ENCODE measurements at regions of chr10 and their contacts with region 1.

Region 1: GRCh38 chr10:97686962-97687784 is at the start of gene AVPI1:
- DNase-seq: peak; percentile 95
- ATAC-seq: peak; percentile 84
- H3K4me3 ChIP-seq: peak within 1 kb of the TSS; percentile 91 to 97 (median 95)
- H3K27ac ChIP-seq: peak within 1 kb of the TSS; percentile 94
- H3K4me1 ChIP-seq: peaks cover 54% of the 10 kb centered on the region
- H3K27me3 ChIP-seq: no peaks in the 10 kb centered on the region; a peak in 1 of 5 replicates
- CTCF ChIP-seq: peak; percentile 25; the same call in 1 of the 2 replicates
- EP300 ChIP-seq: peak; percentile 27 to 31; a peak in 2 of 4 replicates
- POLR2A ChIP-seq: peak; percentile 84 to 87
- RAD21 ChIP-seq: peak; percentile 20; the same call in 1 of the 2 replicates
- total RNA-seq, gene AVPI1: 39.8 and 47.6 TPM in 2 replicates

Region 2: GRCh38 chr10:97101166-97101940 is 585.8 kb before region 1 on chr10:
- CTCF ChIA-PET with region 1: no interaction called
- POLR2A ChIA-PET with region 1: no interaction called
- in situ Hi-C with region 1: no loop called
- intact Hi-C with region 1: no loop called
- DNase-seq: no peak
- ATAC-seq: no peak
- H3K4me3 ChIP-seq: no peak overlapping the region
- H3K27ac ChIP-seq: no peak overlapping the region
- H3K4me1 ChIP-seq: no peaks in the 10 kb centered on the region
- H3K27me3 ChIP-seq: peaks cover 8 to 90% of the 10 kb centered on the region in 2 experiments
- CTCF ChIP-seq: no peak
- EP300 ChIP-seq: no peak
- POLR2A ChIP-seq: no peak
- RAD21 ChIP-seq: no peak

Region 3: GRCh38 chr10:97584060-97584797 is 102.9 kb before region 1 on chr10 and contains the start of gene HOGA1:
- CTCF ChIA-PET with region 1: no interaction called
- POLR2A ChIA-PET with region 1: interaction called, 11 read pairs
- in situ Hi-C with region 1: no loop called
- intact Hi-C with region 1: no loop called
- DNase-seq: peak; percentile 91
- ATAC-seq: peak; percentile 97
- H3K4me3 ChIP-seq: peak within 1 kb of the TSS; percentile 48 to 72 (median 54)
- H3K27ac ChIP-seq: peak within 1 kb of the TSS; percentile 69
- H3K4me1 ChIP-seq: peaks cover 60% of the 10 kb centered on the region
- H3K27me3 ChIP-seq: peaks cover 0 to 12% of the 10 kb centered on the region in 2 experiments; a peak in 1 of 5 replicates
- CTCF ChIP-seq: no peak
- EP300 ChIP-seq: no peak
- POLR2A ChIP-seq: peak; percentile 42 to 53; a peak in 3 of 4 replicates
- RAD21 ChIP-seq: no peak
- total RNA-seq, gene HOGA1: 18.8 and 19.5 TPM in 2 replicates

Region 4: GRCh38 chr10:97640174-97640867 is 46.9 kb before region 1 on chr10 and contains the start of gene PI4K2A:
- CTCF ChIA-PET with region 1: no interaction called
- POLR2A ChIA-PET with region 1: interaction called, 13 read pairs
- in situ Hi-C with region 1: no loop called
- intact Hi-C with region 1: no loop called
- DNase-seq: peak; percentile 98
- ATAC-seq: peak; percentile 99
- H3K4me3 ChIP-seq: peak within 1 kb of the TSS; percentile 81 to 91 (median 89)
- H3K27ac ChIP-seq: peak within 1 kb of the TSS; percentile 52
- H3K4me1 ChIP-seq: peaks cover 34% of the 10 kb centered on the region
- H3K27me3 ChIP-seq: no peaks in the 10 kb centered on the region
- CTCF ChIP-seq: no peak; the same call in 1 of the 2 replicates
- EP300 ChIP-seq: no peak
- POLR2A ChIP-seq: peak; percentile 54 to 57; a peak in 3 of 4 replicates
- RAD21 ChIP-seq: no peak
- total RNA-seq, gene PI4K2A: 14.3 and 16.6 TPM in 2 replicates

Region 5: DNA sequence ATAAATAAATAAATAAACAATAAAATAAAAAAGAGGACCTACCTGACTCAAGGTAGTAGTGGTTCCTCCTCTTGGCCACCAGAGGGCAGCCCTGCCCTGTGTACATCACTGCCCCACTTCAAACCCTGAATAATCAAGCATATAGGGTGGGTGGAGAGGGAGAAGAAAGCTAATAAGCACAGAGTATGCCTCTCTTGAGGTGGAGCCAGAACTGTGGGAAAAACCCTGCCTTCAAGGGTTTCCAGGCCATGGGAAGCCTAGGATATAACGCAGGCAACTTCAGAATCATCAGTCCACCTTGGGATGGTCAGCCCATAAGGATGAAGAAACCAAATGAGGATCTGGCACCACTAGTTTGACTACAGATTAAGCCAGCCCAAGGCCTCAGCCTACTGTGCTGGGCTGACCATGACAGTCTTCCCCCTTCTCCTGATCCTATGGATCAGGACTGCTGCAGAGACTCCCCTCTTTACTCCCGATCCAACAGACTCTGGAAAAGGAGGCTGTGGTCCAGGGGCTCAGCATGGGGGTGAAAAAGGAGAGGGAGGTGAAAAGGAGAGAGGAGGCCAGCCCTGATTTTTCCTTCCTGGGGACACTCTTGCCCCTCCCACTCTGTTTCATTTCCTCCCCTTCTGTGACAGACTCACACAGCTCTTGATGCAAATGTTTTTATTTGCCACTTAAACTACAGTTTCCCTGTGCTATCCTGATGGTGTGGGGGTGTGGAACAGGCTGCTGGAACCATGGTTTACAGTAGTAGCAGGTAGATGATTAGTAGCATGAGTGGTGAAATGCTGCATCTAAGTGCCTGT is 10.2 kb before region 1 on chr10:
- CTCF ChIA-PET with region 1: no interaction called
- POLR2A ChIA-PET with region 1: interaction called, 29 read pairs
- in situ Hi-C with region 1: no loop called
- intact Hi-C with region 1: no loop called
- DNase-seq: peak; percentile 49
- ATAC-seq: peak; percentile 75
- H3K4me3 ChIP-seq: no peak overlapping the region
- H3K27ac ChIP-seq: no peak overlapping the region
- H3K4me1 ChIP-seq: peaks cover 3% of the 10 kb centered on the region
- H3K27me3 ChIP-seq: no peaks in the 10 kb centered on the region
- CTCF ChIP-seq: peak; percentile 82
- EP300 ChIP-seq: no peak
- POLR2A ChIP-seq: peak; percentile 22 to 25; a peak in 1 of 4 replicates
- RAD21 ChIP-seq: peak; percentile 74

Region 6: DNA sequence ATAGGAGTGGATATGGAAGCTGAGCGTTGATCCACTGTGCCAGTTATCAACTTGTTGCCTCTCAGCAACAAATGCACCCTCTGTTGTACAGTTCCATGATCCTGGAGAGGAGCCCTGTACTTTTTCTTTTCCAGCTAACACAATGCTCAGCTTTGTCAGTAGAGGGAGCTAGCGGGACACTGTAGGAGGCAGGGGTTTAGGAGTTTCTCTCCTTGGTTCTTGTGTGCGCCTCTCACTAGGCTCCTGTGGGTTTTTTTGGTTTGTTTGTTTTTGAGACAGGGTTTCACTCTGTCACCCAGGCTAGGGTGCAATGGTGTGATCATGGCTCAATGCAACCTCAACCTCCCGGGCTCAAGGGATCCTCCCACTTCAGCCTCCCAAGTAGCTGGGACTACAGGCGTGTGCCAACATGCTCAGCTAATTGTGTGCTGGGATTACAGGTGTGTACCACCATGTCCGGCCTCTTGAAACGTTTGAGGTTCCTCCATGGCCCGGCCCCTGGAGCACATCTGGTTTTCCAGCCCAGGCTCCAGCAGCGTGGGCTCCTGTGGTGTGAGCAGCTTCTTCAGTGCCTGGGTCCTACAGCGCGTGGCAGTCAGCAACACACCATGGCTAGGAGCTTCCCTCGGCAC is 14.4 kb after region 1 on chr10:
- CTCF ChIA-PET with region 1: interaction called, 6 read pairs
- POLR2A ChIA-PET with region 1: interaction called, 19 read pairs
- in situ Hi-C with region 1: no loop called
- intact Hi-C with region 1: loop called (anchors 1 kb)
- DNase-seq: peak; percentile 70
- ATAC-seq: peak; percentile 90
- H3K4me3 ChIP-seq: no peak overlapping the region
- H3K27ac ChIP-seq: no peak overlapping the region
- H3K4me1 ChIP-seq: peaks cover 49% of the 10 kb centered on the region
- H3K27me3 ChIP-seq: no peaks in the 10 kb centered on the region
- CTCF ChIP-seq: peak; percentile 89
- EP300 ChIP-seq: no peak
- POLR2A ChIP-seq: no peak
- RAD21 ChIP-seq: peak; percentile 75

Region 7: DNA sequence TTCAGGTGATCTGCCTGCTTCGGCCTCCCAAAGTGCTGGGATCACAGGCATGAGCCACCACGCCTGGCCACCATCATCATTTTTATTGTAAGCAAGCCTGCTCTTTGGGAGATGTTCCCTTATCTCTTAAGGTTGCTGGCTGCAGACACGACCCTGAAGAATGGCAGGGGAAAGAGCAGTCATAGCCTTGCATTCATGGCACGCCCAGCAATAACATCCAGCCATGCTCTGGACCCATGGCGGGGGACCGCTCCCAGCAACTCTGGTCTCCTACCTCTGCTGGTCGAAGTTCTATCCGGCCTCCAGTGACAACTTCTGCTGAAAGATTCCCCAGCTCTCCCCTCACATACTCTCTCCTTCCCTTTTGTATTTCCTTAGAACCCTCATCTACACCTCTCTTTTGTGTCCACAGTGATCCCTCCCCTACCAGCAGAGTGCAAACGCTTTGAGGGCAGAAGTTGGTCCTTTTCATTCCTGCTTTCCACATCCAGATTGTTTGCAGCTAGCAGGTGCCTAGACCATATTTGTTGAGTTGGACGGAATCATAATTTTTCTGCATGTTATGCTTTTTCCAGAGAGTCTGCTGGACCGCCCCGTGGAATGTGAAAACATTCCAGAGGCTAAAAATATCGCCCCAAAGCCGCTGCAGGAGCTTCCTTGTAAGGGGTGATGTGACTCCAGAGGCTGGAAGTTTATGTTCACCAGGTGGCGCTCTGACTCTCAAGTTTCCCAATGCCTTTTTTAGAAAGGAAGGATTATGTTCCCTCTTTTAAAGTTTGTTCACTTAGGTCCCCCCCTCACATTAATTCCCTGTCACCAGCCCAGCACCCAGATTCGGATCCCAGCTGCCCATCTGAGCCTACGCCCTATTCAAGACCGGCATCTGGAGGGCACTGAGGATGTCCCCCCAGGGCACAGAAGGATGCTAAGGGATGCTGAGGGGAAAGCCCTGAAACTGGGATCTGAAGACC is 22.1 kb after region 1 on chr10:
- CTCF ChIA-PET with region 1: no interaction called
- POLR2A ChIA-PET with region 1: interaction called, 18 read pairs
- in situ Hi-C with region 1: no loop called
- intact Hi-C with region 1: no loop called
- DNase-seq: peak; percentile 43
- ATAC-seq: peak; percentile 30
- H3K4me3 ChIP-seq: no peak overlapping the region
- H3K27ac ChIP-seq: no peak overlapping the region
- H3K4me1 ChIP-seq: peaks cover 57% of the 10 kb centered on the region
- H3K27me3 ChIP-seq: no peaks in the 10 kb centered on the region; a peak in 1 of 5 replicates
- CTCF ChIP-seq: peak; percentile 72
- EP300 ChIP-seq: no peak
- POLR2A ChIP-seq: no peak
- RAD21 ChIP-seq: 0 out of 2 replicates have a peak, but pooled peaks have one; percentile 25

Region 8: DNA sequence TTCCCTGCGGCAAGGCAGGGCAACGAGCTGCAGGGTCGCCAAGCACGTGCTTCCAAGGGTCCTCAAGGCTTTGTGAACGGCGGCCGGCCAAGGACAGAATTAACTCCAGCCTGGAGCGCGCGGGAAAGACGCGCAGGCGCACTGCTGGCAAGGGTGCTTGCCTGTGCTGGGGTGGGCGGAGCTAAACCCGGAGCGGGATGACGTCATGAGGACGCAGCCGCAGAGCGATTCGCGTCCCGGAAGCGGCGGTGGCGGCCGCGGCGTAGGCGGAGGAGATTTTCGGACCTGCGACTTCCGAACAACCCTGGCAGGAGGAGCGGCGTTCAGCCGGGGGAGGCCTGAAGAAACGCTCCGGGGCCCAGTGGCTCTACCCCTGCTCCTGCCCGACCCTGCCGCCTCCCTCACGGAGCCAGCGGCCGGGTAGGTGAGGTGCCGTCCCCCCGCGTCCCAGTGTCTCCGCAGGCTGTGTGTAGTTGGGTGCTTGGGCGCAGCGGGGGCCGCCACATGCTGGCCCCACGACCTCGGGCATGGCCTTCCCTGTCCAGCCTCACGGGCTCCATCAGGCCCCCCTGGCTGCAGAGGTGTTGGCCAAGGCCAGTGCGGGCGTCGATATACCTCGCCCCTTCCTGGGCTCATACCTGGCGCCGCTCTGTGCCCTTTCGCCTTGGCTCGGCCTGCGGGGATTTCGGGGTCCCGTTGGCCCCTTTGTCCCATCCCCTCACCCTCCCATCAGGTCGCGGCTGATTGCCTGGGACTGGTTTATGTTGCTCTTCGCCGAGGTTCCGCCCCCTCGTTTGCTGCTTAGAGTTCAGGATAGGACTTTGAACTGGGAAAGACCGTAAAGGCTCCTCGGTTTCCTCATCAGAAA is 50.0 kb after region 1 on chr10 and contains the start of gene ZFYVE27:
- CTCF ChIA-PET with region 1: interaction called, 4 read pairs
- POLR2A ChIA-PET with region 1: interaction called, 39 read pairs
- in situ Hi-C with region 1: no loop called
- intact Hi-C with region 1: no loop called
- DNase-seq: peak; percentile 87
- ATAC-seq: peak; percentile 83
- H3K4me3 ChIP-seq: peak within 1 kb of the TSS; percentile 82 to 95 (median 91)
- H3K27ac ChIP-seq: peak within 1 kb of the TSS; percentile 88
- H3K4me1 ChIP-seq: peaks cover 27% of the 10 kb centered on the region
- H3K27me3 ChIP-seq: peaks cover 0 to 10% of the 10 kb centered on the region in 2 experiments; a peak in 2 of 5 replicates
- CTCF ChIP-seq: peak; percentile 19; the same call in 1 of the 2 replicates
- EP300 ChIP-seq: no peak; a peak in 1 of 4 replicates
- POLR2A ChIP-seq: peak; percentile 89 to 93
- RAD21 ChIP-seq: peak; percentile 20; the same call in 1 of the 2 replicates
- total RNA-seq, gene ZFYVE27: 6.1 and 19.7 TPM in 2 replicates

Region 9: GRCh38 chr10:98380493-98381339 is 693.5 kb after region 1 on chr10:
- CTCF ChIA-PET with region 1: no interaction called
- POLR2A ChIA-PET with region 1: no interaction called
- in situ Hi-C with region 1: no loop called
- intact Hi-C with region 1: no loop called
- DNase-seq: no peak
- ATAC-seq: no peak
- H3K4me3 ChIP-seq: no peak overlapping the region
- H3K27ac ChIP-seq: no peak overlapping the region
- H3K4me1 ChIP-seq: no peaks in the 10 kb centered on the region
- H3K27me3 ChIP-seq: peaks cover 2 to 3% of the 10 kb centered on the region in 2 experiments; a peak in 1 of 5 replicates
- CTCF ChIP-seq: no peak
- EP300 ChIP-seq: no peak
- POLR2A ChIP-seq: no peak
- RAD21 ChIP-seq: no peak

Measured in HepG2 (cell line).